HEK293T (cell line): ENCODE measurements at regions of chr5 and their contacts with region 1.

Region 1: GRCh38 chr5:158701406-158702177 is 398.1 kb downstream of the EBF1 start:
- DNase-seq: no peak

Region 2: GRCh38 chr5:158724521-158725188 is 23.1 kb after region 1 on chr5:
- CTCF ChIA-PET with region 1: interaction called, 12 read pairs
- POLR2A ChIA-PET with region 1: no interaction called
- DNase-seq: no peak

Region 3: GRCh38 chr5:159106569-159107282 is 405.1 kb after region 1 on chr5:
- CTCF ChIA-PET with region 1: interaction called, 48 read pairs
- POLR2A ChIA-PET with region 1: no interaction called
- DNase-seq: peak; percentile 80